ENCODE measurements at regions of chr13 and their contacts with region 1.

Region 1: DNA sequence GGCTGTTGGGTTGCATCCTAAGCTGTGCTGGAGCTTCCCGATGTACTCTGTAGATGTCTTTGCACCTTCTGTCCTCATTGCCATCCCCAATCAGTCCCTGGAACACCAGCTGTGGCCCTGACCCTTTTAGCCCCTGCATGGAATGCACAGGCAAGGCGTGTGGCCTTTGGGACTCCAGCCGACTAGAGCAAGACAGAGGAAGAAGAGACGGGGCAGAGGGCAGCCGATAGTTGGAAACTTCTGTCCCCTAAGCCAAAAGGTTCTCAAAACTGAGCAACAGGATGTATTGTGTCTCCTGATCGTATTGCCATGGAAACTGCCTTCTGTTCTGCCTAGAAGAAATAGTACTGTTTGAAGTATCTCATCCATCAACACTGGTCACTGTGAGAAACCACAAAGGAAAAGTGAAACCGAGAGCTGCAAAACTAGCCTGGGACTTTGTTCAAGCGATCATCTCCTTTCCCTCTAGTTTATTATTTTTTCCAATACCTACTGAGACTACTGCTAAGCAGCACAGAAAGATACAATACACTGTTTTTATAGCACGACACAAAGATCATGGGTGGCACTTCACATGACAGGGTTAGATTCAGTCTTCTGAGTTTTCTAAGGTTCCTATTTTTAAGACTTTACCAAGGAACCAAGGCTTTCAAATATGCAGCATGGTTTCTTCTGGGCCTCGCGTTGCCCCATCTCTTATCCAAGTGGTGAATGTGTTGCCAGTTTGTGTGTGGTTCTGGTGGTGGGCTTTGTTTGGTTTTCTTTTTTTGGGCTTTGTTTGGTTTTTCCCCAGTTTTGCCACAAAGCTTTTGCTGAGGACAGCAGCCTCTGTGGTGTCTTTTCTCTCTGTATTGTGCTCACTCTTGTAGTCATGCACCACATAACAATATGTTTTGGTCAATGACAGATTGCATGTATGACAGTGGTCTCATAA is 49.2 kb upstream of the GPR183 start:
- DNase-seq: peak; percentile 91
- ATAC-seq: peak; percentile 60
- H3K4me3 ChIP-seq: peak overlapping the region in 4 of 5 experiments; percentile 13 to 47 (median 28)
- H3K4me3 Mint-ChIP-seq: peak overlapping the region; percentile 78
- H3K27ac ChIP-seq: peak overlapping the region; percentile 95 to 97
- H3K27ac Mint-ChIP-seq: peak overlapping the region; percentile 98
- H3K4me1 ChIP-seq: peaks cover 73 to 92% of the 10 kb centered on the region in 2 donors
- H3K4me1 Mint-ChIP-seq: peaks cover 96% of the 10 kb centered on the region
- H3K27me3 ChIP-seq: no peaks in the 10 kb centered on the region
- H3K27me3 Mint-ChIP-seq: no peaks in the 10 kb centered on the region
- CTCF ChIP-seq: no peak

Region 2: GRCh38 chr13:99322297-99323103 is 33.9 kb before region 1 on chr13:
- CTCF ChIA-PET with region 1: interaction called, 4 read pairs
- POLR2A ChIA-PET with region 1: no interaction called
- intact Hi-C with region 1: loop called (anchors 5 kb)
- DNase-seq: peak; percentile 46
- ATAC-seq: peak; percentile 78
- H3K4me3 ChIP-seq: no peak overlapping the region
- H3K4me3 Mint-ChIP-seq: peak overlapping the region; percentile 77
- H3K27ac ChIP-seq: peak overlapping the region; percentile 56 to 73
- H3K27ac Mint-ChIP-seq: peak overlapping the region; percentile 91
- H3K4me1 ChIP-seq: peaks cover 43 to 49% of the 10 kb centered on the region in 2 donors
- H3K4me1 Mint-ChIP-seq: peaks cover 58% of the 10 kb centered on the region
- H3K27me3 ChIP-seq: no peaks in the 10 kb centered on the region
- H3K27me3 Mint-ChIP-seq: no peaks in the 10 kb centered on the region
- CTCF ChIP-seq: no peak